Common myeloid progenitor, CD34-positive (primary cell): ENCODE measurements at regions of chr19 and their contacts with region 1.

Region 1: DNA sequence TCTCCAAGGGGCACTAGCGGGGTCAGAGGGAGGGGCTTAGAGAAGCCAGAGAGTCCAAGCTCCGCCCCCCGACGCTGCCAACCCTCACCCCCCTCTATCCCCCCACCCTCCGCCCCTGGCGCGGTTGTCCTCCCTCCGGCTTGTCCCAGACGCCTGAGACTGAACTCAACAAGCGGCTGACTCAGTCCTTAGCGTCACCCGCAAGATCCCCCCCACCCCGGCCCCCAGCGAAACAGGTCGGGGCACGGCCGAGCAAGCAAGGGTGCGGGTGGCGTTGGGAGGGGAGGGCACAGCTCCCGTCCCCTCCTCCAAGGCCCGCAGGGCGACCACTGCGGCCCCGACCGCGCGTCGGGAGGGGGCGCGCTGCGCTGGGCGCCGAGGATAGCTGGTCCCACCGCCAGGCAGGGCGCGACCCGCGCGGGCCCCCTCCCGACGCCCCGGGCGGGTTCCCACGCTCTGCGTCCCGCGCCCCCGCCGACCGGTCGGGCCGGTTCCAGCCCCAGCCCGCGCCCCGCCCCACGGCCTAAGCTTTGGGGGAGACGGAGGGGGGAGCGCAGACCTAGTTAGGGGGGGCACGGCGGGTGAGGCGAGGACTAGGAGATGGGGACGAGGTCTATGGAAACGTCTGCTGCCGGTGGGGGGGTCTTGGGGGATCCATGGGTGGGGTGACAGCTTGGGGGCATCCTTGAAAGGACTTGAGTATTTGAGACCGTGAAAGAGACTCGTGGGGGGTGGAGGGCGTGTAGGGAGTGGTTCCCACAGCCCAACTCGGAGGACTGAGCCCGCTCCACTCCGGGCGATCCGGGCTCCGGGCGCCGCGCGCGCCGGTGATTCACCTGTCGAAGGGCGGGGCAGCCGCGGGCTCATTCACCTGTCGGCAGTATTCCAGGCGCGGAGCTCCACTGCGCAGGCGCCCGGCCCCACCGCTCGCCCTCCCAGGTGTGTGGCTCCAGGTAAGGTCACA is 5.1 kb downstream of the NOTCH3 start:
- DNase-seq: peak; percentile 72 to 85 (median 81)
- H3K4me3 ChIP-seq: peak overlapping the region in 6 of 7 experiments; percentile 16 to 66 (median 35)
- H3K27ac ChIP-seq: no peak overlapping the region
- H3K4me1 ChIP-seq: peaks cover 0 to 41% (median 33%) of the 10 kb centered on the region in 4 experiments
- H3K27me3 ChIP-seq: peaks cover 0 to 27% (median 6%) of the 10 kb centered on the region in 5 experiments

Region 2: GRCh38 chr19:15081911-15082310 is 113.7 kb before region 1 on chr19 and contains the start of gene OR1I1:
- CTCF ChIA-PET with region 1: no interaction called
- POLR2A ChIA-PET with region 1: no interaction called
- DNase-seq: no peak
- H3K4me3 ChIP-seq: no peak within 1 kb of the TSS
- H3K27ac ChIP-seq: no peak within 1 kb of the TSS
- H3K4me1 ChIP-seq: no peaks in the 10 kb centered on the region
- H3K27me3 ChIP-seq: peaks cover 0 to 6% (median 0%) of the 10 kb centered on the region in 5 experiments

Region 3: GRCh38 chr19:15185188-15185587 is 10.5 kb before region 1 on chr19:
- CTCF ChIA-PET with region 1: interaction called, 17 read pairs
- POLR2A ChIA-PET with region 1: no interaction called
- DNase-seq: no peak
- H3K4me3 ChIP-seq: no peak overlapping the region
- H3K27ac ChIP-seq: no peak overlapping the region
- H3K4me1 ChIP-seq: peaks cover 0 to 4% (median under 1%) of the 10 kb centered on the region in 4 experiments
- H3K27me3 ChIP-seq: peaks cover 0 to 5% (median 0%) of the 10 kb centered on the region in 5 experiments

Region 4: DNA sequence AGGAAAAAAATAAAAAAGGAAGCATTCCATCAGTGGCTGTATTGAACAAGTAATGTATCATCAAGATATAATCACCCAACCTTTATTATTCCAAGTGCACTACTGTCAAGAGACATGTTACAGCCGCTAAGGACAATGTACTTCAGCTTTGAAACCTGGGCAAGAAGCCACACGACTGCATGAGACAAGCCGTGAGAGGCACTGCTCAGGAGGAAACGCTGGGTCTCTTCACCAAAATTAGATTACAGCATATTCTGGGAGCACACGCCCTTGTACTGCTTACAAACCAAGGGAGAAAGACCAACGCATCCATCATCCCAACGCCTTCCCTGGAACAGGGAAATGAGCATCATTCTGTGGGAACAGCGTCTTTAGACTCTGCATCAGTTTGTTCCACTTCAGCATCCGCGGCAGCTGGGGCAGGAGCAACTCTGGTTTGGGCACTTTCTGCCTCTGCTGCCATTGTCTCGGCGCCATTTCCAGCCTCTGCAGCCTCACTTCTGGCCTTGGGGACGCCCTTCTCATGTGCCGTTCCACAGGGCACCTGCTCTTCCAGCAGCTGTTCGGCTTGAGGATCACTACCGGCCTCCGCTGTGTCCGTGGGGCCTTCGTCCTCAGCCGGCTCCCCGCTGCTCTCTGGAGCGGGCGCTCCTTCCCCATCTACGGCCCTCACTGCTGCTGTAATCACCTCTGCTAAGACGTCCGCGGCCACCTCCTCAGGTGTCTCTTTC is 159.1 kb after region 1 on chr19:
- CTCF ChIA-PET with region 1: no interaction called
- POLR2A ChIA-PET with region 1: no interaction called
- DNase-seq: no peak
- H3K4me3 ChIP-seq: no peak overlapping the region
- H3K27ac ChIP-seq: no peak overlapping the region
- H3K4me1 ChIP-seq: peaks cover 0 to 8% (median 0%) of the 10 kb centered on the region in 4 experiments
- H3K27me3 ChIP-seq: no peaks in the 10 kb centered on the region